ENCODE measurements at regions of chr9 and their contacts with region 1.

Region 1: DNA sequence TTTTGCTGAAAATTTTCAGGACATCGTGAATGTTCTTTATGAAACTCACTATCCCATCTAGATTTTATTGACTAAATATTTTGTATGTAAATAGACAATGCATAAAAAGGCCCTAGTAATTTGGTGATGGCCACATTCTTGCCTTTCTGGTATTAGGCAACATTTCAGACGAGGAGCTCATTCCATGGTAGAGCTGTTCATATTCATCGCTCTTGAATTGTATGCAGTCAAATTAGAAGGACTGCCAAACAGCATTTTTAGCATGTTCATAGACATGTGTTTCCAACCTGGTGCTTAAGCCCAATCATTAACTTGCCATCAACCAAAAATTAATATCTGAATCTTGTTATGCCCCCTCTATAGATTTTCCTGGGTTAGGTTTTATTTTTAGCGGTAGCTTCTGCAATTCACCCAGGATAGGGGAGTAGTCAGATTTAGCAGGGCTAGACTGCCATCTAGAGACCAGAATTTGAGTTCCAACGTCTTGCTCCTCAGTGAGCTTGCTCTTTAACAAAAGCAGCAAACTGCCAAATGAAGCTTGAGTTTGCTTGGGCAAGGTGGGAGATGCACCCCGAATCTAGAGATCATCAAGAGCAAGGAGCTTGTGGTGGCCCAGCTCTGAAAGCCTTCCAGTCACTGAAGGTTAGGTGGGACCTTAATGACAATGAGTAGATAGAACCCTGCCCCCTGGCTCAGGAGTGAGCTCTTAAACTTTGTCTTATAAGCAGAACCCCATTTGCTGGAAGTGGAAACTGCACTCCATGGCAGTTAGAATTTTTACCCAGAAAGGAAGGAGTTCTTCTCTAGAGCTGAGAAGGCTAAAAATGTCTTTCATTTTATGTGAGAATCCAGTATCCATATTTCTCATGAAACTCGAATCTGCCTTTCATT is 456.2 kb downstream of the RASEF start:
- DNase-seq: peak in 1 of 3 donors; percentile 64
- ATAC-seq: peak; percentile 72 to 82 (median 80)
- H3K4me3 ChIP-seq: no peak overlapping the region
- H3K27ac ChIP-seq: peak overlapping the region; percentile 39 to 91 (median 90)
- H3K4me1 ChIP-seq: peaks cover 0 to 25% (median 11%) of the 10 kb centered on the region in 4 donors
- H3K27me3 ChIP-seq: no peaks in the 10 kb centered on the region
- CTCF ChIP-seq: peak; percentile 57 to 80 (median 74)
- POLR2A ChIP-seq: no peak

Region 2: GRCh38 chr9:82532504-82533180 is 74.1 kb before region 1 on chr9:
- intact Hi-C with region 1: loop called in 1 of 2 experiments (anchors 10 kb)
- DNase-seq: no peak
- ATAC-seq: peak; percentile 73 to 89 (median 80)
- H3K4me3 ChIP-seq: no peak overlapping the region
- H3K27ac ChIP-seq: no peak overlapping the region
- H3K4me1 ChIP-seq: peaks cover 0 to 9% (median 1%) of the 10 kb centered on the region in 4 donors
- H3K27me3 ChIP-seq: no peaks in the 10 kb centered on the region
- CTCF ChIP-seq: peak; percentile 45 to 54 (median 50)
- POLR2A ChIP-seq: no peak